HEK293T (cell line): ENCODE measurements at regions of chr4 and their contacts with region 1.

Region 1: GRCh38 chr4:141133146-141133998 is at the start of gene RNF150:
- DNase-seq: peak; percentile 77

Region 2: GRCh38 chr4:140861359-140862176 is 271.8 kb before region 1 on chr4:
- CTCF ChIA-PET with region 1: interaction called, 41 read pairs
- POLR2A ChIA-PET with region 1: interaction called, 7 read pairs
- DNase-seq: peak; percentile 62

Region 3: GRCh38 chr4:140869446-140869845 is 263.9 kb before region 1 on chr4:
- CTCF ChIA-PET with region 1: interaction called, 11 read pairs
- POLR2A ChIA-PET with region 1: interaction called, 4 read pairs
- DNase-seq: no peak

Region 4: GRCh38 chr4:140887467-140887866 is 245.9 kb before region 1 on chr4:
- CTCF ChIA-PET with region 1: interaction called, 13 read pairs
- POLR2A ChIA-PET with region 1: interaction called, 5 read pairs
- DNase-seq: no peak

Region 5: DNA sequence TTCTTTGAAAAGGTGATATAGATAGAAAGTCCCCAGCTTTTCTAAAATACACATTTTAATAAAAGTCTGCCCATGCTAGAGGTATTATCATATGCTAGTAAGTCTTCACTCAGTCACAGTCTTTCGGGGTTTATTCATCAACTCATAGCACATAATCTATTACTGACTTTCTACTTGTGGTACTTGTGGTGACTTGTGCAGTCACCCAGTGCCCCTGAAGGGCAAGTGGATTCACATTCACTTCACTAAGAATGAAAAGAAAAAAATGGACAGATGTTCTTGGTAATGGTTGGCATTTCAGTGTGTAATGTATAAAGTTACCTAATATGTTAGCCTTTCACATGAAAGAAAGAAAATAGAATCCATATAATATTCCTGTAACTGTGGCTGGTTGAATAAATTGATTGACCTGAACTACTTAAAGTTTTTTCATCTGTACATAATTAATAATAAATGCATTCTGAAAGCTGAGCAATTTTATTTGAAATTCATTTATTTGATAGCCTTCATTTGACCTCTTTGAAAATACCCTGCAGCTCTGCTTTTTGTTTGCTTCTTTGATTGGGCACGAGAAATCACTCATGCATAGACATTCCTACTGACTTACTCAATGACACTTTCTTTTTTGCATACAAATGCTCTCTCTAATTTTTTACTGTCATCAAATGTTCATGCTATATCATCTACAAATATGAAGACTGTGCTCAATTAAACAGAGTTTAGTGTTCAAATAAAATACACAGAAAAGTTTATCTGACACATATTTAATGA is 47.8 kb after region 1 on chr4:
- CTCF ChIA-PET with region 1: no interaction called
- POLR2A ChIA-PET with region 1: no interaction called
- DNase-seq: no peak